Activated CD4-positive, alpha-beta T cell treated with anti-CD3 and anti-CD28 coated beads for 36 hours (primary cell): ENCODE measurements at regions of chr1 and their contacts with region 1.

Region 1: DNA sequence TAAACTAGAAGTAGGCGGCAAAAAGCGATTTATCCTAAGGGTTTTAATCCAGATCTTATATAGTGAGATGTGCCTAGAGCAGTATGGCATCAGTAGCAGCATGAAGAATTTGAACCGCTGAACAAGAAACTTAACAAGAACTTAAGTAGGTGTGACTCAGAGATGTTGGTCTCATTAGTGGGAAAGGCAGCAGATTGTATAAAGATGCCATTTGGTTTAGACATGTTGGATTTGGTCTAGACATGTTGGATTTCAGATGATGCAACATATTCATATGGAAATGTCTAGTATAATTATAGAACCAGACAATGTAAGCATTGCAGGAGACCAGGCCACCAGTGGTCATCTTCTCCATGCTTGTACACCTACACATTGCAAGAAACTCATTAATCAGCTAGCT is 42.1 kb upstream of the ZP4 start:
- DNase-seq: no peak
- ATAC-seq: no peak
- H3K4me3 Mint-ChIP-seq: no peak overlapping the region
- H3K27ac Mint-ChIP-seq: no peak overlapping the region
- H3K4me1 Mint-ChIP-seq: no peaks in the 10 kb centered on the region
- H3K27me3 Mint-ChIP-seq: no peaks in the 10 kb centered on the region

Region 2: GRCh38 chr1:237570530-237570929 is 362.3 kb before region 1 on chr1:
- CTCF ChIA-PET with region 1: no interaction called
- POLR2A ChIA-PET with region 1: no interaction called
- intact Hi-C with region 1: no loop called
- DNase-seq: no peak
- ATAC-seq: no peak
- H3K4me3 Mint-ChIP-seq: no peak overlapping the region
- H3K27ac Mint-ChIP-seq: no peak overlapping the region
- H3K4me1 Mint-ChIP-seq: no peaks in the 10 kb centered on the region
- H3K27me3 Mint-ChIP-seq: no peaks in the 10 kb centered on the region

Region 3: GRCh38 chr1:237921306-237921705 is 11.5 kb before region 1 on chr1:
- CTCF ChIA-PET with region 1: no interaction called
- POLR2A ChIA-PET with region 1: no interaction called
- intact Hi-C with region 1: loop called in 1 of 2 experiments (anchors 1 kb)
- DNase-seq: no peak
- ATAC-seq: no peak
- H3K4me3 Mint-ChIP-seq: no peak overlapping the region
- H3K27ac Mint-ChIP-seq: no peak overlapping the region
- H3K4me1 Mint-ChIP-seq: no peaks in the 10 kb centered on the region
- H3K27me3 Mint-ChIP-seq: no peaks in the 10 kb centered on the region